HCT116 (cell line): ENCODE measurements at regions of chr3 and their contacts with region 1.

Region 1: GRCh38 chr3:13879655-13880204 is at the start of gene WNT7A:
- DNase-seq: no peak
- ATAC-seq: peak; percentile 30
- H3K4me3 ChIP-seq: peak within 1 kb of the TSS; percentile 49 to 63
- H3K27ac ChIP-seq: no peak within 1 kb of the TSS
- H3K4me1 ChIP-seq: peaks cover 5 to 33% of the 10 kb centered on the region in 2 experiments; a peak in 3 of 4 replicates
- H3K27me3 ChIP-seq: peaks cover 33% of the 10 kb centered on the region
- CTCF ChIP-seq: no peak
- POLR2A ChIP-seq: no peak
- RAD21 ChIP-seq: no peak
- total RNA-seq, gene WNT7A: 0.34 TPM

Region 2: GRCh38 chr3:13673209-13673608 is 206.5 kb before region 1 on chr3:
- CTCF ChIA-PET with region 1: interaction called, 6 read pairs
- POLR2A ChIA-PET with region 1: no interaction called
- RAD21 ChIA-PET with region 1: no interaction called
- intact Hi-C with region 1: loop called (anchors 5 kb)
- DNase-seq: no peak
- ATAC-seq: peak; percentile 77
- H3K4me3 ChIP-seq: no peak overlapping the region
- H3K27ac ChIP-seq: no peak overlapping the region
- H3K4me1 ChIP-seq: no peaks in the 10 kb centered on the region
- H3K27me3 ChIP-seq: peaks cover 28% of the 10 kb centered on the region; the same call in 1 of the 2 replicates
- CTCF ChIP-seq: peak; percentile 21 to 63 (median 61); a peak in 5 of 6 replicates
- POLR2A ChIP-seq: no peak
- RAD21 ChIP-seq: peak; percentile 31; the same call in 1 of the 2 replicates